Mammary epithelial cell (primary cell): ENCODE measurements at regions of chr11 and their contacts with region 1.

Region 1: GRCh38 chr11:8964324-8965320 is at the start of gene TMEM9B:
- DNase-seq: peak; percentile 92
- H3K4me3 ChIP-seq: peak within 1 kb of the TSS; percentile 90 to 96 (median 95)
- H3K27ac ChIP-seq: peak within 1 kb of the TSS; percentile 86
- H3K4me1 ChIP-seq: peaks cover 23% of the 10 kb centered on the region
- H3K27me3 ChIP-seq: no peaks in the 10 kb centered on the region
- CTCF ChIP-seq: no peak
- total RNA-seq, gene TMEM9B: 37.8 to 52.7 TPM

Region 2: GRCh38 chr11:8090756-8091155 is 873.9 kb before region 1 on chr11:
- CTCF ChIA-PET with region 1: no interaction called
- dilution Hi-C with region 1: no loop called
- in situ Hi-C with region 1: no loop called
- intact Hi-C with region 1: no loop called
- DNase-seq: no peak
- H3K4me3 ChIP-seq: no peak overlapping the region
- H3K27ac ChIP-seq: no peak overlapping the region
- H3K4me1 ChIP-seq: no peaks in the 10 kb centered on the region
- H3K27me3 ChIP-seq: no peaks in the 10 kb centered on the region
- CTCF ChIP-seq: peak; percentile 36 to 53

Region 3: GRCh38 chr11:8247312-8247711 is 717.3 kb before region 1 on chr11:
- CTCF ChIA-PET with region 1: no interaction called
- dilution Hi-C with region 1: no loop called
- in situ Hi-C with region 1: no loop called
- intact Hi-C with region 1: loop called (anchors 1 kb)
- DNase-seq: no peak
- H3K4me3 ChIP-seq: no peak overlapping the region
- H3K27ac ChIP-seq: no peak overlapping the region
- H3K4me1 ChIP-seq: no peaks in the 10 kb centered on the region
- H3K27me3 ChIP-seq: no peaks in the 10 kb centered on the region
- CTCF ChIP-seq: peak; percentile 67 to 83

Region 4: DNA sequence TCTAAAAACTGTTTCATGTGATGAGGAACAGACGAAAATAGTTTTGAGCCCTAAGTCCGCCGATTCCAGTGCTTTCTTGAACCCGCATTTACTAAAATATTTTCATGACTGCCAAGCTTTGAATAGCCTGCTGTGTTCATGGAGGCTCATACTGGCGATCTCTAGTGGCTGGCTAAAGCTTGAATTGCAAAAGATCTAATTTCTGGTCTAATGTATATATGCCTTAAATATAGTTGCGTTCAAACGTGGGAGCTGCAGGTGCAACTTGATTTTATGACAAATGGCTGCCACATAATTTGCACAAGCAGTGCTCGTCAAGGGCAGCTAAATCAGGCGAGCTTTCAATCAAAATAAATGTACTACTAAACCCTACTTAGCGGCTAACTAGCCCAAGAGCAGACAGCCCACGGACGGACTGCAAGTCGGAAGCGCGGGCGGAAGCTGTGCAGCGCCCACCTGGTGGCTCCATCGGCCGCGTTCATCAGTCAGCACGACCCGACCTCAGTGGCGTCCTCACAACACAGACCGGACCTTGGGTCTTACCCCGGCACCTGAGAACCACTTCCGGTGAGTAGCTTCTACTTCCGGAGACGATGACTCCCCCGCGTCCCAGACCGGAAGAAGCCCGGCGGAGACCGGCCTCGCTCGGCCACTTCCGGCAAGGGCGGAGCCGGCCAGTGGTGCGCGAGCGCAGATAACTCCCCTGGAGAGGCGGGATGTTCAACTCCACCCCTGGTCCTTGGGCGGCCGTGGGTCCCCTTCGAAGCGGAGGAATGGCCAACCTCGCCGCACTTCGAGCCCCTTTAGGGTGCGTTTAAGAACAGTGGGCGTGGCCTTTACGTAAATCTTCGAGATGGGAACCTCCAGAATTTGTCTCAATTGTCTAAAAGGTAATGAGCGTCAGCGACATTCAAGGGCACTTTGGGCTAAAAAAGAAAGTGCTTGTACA is 275.9 kb before region 1 on chr11:
- CTCF ChIA-PET with region 1: interaction called, 6 read pairs
- dilution Hi-C with region 1: no loop called
- in situ Hi-C with region 1: loop called (anchors 5 to 10 kb)
- intact Hi-C with region 1: loop called (anchors 1 kb)
- DNase-seq: peak; percentile 95
- H3K4me3 ChIP-seq: peak overlapping the region; percentile 51 to 62 (median 52)
- H3K27ac ChIP-seq: peak overlapping the region; percentile 52
- H3K4me1 ChIP-seq: peaks cover 36% of the 10 kb centered on the region
- H3K27me3 ChIP-seq: no peaks in the 10 kb centered on the region
- CTCF ChIP-seq: peak in 1 of 2 donors; percentile 8

Region 5: DNA sequence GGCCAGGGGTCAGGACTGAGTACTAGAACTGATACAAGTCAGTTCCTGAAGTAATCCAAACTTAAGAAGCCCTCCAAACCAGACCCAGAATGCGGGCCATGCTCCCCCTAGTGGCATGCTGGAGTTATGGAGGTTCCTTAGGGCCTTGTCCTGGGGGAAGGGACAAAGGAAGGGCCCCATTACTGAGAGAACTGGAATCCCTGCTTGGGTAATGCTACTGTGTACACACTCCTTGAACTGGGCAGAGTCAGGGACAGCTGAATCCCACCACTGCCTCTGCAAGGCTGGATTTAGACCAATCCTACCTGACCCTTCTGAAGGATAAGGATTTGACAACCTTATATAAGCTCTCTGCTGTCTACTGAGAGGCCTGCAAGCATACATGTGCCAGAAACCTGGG is 151.0 kb before region 1 on chr11:
- CTCF ChIA-PET with region 1: interaction called, 4 read pairs
- dilution Hi-C with region 1: no loop called
- in situ Hi-C with region 1: no loop called
- intact Hi-C with region 1: loop called (anchors 1 kb)
- DNase-seq: peak; percentile 72
- H3K4me3 ChIP-seq: no peak overlapping the region
- H3K27ac ChIP-seq: peak overlapping the region; percentile 94
- H3K4me1 ChIP-seq: peaks cover 46% of the 10 kb centered on the region
- H3K27me3 ChIP-seq: no peaks in the 10 kb centered on the region
- CTCF ChIP-seq: peak; percentile 91 to 93

Region 6: DNA sequence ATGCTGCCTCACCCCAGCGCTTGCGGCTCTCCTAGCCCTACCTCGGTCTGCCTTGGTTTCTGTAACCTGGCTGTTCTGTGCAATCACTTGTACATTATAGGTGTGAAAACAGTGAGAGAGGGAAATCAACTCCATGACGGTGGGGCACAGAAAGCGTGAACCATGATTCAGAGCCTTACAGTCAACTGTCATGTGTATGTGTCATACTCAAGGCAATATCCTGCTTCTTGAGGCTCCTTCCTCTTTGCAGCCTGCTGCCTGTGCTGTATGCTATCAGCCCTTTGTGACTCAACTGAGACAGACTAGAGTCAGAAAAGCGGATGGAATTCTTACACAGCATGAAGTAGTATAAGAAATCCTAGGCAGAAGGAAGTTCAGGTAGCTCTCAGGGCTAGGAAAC is 37.1 kb after region 1 on chr11:
- CTCF ChIA-PET with region 1: no interaction called
- dilution Hi-C with region 1: no loop called
- in situ Hi-C with region 1: no loop called
- intact Hi-C with region 1: loop called (anchors 1 kb)
- DNase-seq: peak; percentile 87
- H3K4me3 ChIP-seq: no peak overlapping the region
- H3K27ac ChIP-seq: no peak overlapping the region
- H3K4me1 ChIP-seq: peaks cover 23% of the 10 kb centered on the region
- H3K27me3 ChIP-seq: peaks cover 10% of the 10 kb centered on the region
- CTCF ChIP-seq: no peak

Region 7: DNA sequence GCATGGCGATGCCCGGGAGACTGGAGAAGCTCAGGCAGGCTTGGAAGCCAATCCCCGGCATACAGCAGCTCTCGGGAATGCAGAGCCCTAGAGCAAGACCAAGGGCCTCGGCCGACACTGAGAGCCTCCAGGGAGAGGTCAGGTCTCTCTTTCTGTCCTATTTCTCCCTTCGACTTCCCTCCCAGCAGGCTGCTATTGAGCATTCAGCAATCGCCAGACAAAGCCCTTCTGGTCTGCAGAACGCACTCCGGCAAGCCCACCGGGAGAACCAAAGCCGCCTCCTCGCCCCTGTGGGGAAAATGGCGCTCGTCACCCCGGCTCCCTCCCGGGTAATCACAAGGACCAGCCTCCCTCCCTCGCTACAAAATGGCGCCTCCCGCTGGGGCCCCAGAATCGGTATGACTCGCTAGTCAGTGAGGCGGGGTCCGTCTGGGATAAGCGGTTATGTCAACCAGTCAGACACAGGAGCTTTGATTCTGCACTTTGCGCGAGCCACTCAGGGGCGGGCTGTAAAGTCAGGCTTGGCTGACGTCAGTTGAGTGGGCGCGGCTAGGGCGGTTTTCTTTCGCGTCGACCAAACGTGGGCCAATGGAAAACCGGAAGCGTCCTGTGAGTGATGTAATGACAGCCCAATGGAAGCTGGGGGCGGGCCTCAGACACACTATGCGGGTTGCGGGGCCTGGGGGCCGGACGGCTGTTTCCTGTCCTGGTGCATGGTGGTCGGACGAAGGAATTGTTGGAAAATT is 495.9 kb after region 1 on chr11 and contains the start of gene ZNF143:
- CTCF ChIA-PET with region 1: no interaction called
- dilution Hi-C with region 1: no loop called
- in situ Hi-C with region 1: no loop called
- intact Hi-C with region 1: no loop called
- DNase-seq: peak; percentile 100
- H3K4me3 ChIP-seq: peak within 1 kb of the TSS; percentile 65 to 88 (median 82)
- H3K27ac ChIP-seq: peak within 1 kb of the TSS; percentile 98
- H3K4me1 ChIP-seq: peaks cover 19% of the 10 kb centered on the region
- H3K27me3 ChIP-seq: no peaks in the 10 kb centered on the region
- CTCF ChIP-seq: no peak
- total RNA-seq, gene ZNF143: 19.5 to 22.7 TPM